Dorsolateral prefrontal cortex (tissue), 120 donors: ENCODE measurements at regions of chrX and their contacts with region 1.

Region 1: GRCh38 chrX:123173833-123174232 is 10.2 kb upstream of the GRIA3 start:
- DNase-seq: no peak
- H3K4me3 ChIP-seq: no peak overlapping the region
- H3K27ac ChIP-seq: no peak overlapping the region
- H3K27me3 ChIP-seq: peaks cover 0 to 48% (median 5%) of the 10 kb centered on the region in 45 donors
- CTCF ChIP-seq: peak in 14 of 56 donors; percentile 13 to 48 (median 22)

Region 2: DNA sequence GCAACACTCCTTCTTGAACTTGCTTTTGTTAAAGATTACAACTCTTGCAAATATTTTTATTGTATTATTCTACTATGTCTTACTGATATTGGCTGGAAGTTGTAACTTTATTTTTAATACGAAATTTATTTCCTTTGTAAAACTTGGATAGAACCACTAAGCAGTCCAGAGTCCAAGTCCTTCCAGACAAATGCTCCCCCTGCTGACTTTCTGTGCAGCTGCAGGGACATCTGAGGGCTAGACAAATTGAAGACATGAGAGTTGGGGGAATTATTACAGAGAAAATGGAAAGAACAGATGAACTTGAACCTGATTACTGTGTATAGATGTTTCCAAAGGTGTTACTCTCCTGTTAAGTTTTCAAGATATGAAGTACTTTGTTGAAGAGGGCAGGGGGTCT is 249.0 kb after region 1 on chrX:
- intact Hi-C with region 1: loop called in 1 of 2 experiments (anchors 5 kb)
- DNase-seq: peak in 4 of 10 donors; percentile 10 to 42 (median 28)
- H3K4me3 ChIP-seq: no peak overlapping the region
- H3K27ac ChIP-seq: no peak overlapping the region
- H3K27me3 ChIP-seq: peaks cover 0 to 62% (median 2%) of the 10 kb centered on the region in 45 donors
- CTCF ChIP-seq: peak in 54 of 56 donors; percentile 37 to 73 (median 58)